ENCODE measurements at regions of chr9 and their contacts with region 1.

Region 1: GRCh38 chr9:26026423-26027100 is 348.3 kb upstream of the TUSC1 start:
- DNase-seq: no peak
- ATAC-seq: no peak
- H3K4me3 ChIP-seq: no peak overlapping the region
- H3K27ac ChIP-seq: no peak overlapping the region
- H3K4me1 ChIP-seq: no peaks in the 10 kb centered on the region
- H3K27me3 ChIP-seq: no peaks in the 10 kb centered on the region
- CTCF ChIP-seq: no peak

Region 2: GRCh38 chr9:25724424-25724823 is 302.1 kb before region 1 on chr9:
- intact Hi-C with region 1: no loop called
- DNase-seq: no peak
- ATAC-seq: no peak
- H3K4me3 ChIP-seq: no peak overlapping the region
- H3K27ac ChIP-seq: no peak overlapping the region
- H3K4me1 ChIP-seq: no peaks in the 10 kb centered on the region
- H3K27me3 ChIP-seq: no peaks in the 10 kb centered on the region
- CTCF ChIP-seq: no peak

Region 3: GRCh38 chr9:26086396-26086795 is 59.8 kb after region 1 on chr9:
- intact Hi-C with region 1: loop called in 1 of 2 experiments (anchors 10 kb)
- DNase-seq: no peak
- ATAC-seq: no peak
- H3K4me3 ChIP-seq: no peak overlapping the region
- H3K27ac ChIP-seq: no peak overlapping the region
- H3K4me1 ChIP-seq: no peaks in the 10 kb centered on the region
- H3K27me3 ChIP-seq: no peaks in the 10 kb centered on the region
- CTCF ChIP-seq: no peak

Region 4: DNA sequence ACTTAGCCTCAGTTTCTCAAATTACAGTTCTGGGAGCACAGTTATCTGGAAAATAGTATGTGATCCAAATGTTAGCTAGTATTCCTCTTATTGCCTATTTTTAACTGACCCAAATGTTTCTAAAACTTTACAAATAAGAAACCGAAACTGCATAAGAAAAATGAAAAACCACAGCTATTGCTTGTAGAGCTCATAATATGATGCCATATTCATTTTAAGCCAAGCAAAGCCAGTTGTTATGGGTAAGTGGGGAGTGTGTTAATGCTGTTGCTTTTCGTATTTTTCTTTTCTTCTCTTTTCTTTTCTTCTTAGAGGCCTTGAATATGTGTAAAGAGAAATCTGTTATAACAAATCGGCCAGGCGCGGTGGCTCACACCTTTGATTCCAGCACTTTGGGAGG is 99.1 kb after region 1 on chr9:
- intact Hi-C with region 1: no loop called
- DNase-seq: no peak
- ATAC-seq: no peak
- H3K4me3 ChIP-seq: no peak overlapping the region
- H3K27ac ChIP-seq: no peak overlapping the region
- H3K4me1 ChIP-seq: no peaks in the 10 kb centered on the region
- H3K27me3 ChIP-seq: no peaks in the 10 kb centered on the region
- CTCF ChIP-seq: no peak